ENCODE measurements at regions of chr1 and their contacts with region 1.

Region 1: GRCh38 chr1:174153085-174153825 is 6.1 kb upstream of the RABGAP1L start:
- DNase-seq: no peak
- H3K4me3 Mint-ChIP-seq: no peak overlapping the region
- H3K27ac Mint-ChIP-seq: peak overlapping the region; percentile 66
- H3K4me1 Mint-ChIP-seq: peaks cover 48% of the 10 kb centered on the region
- H3K27me3 Mint-ChIP-seq: no peaks in the 10 kb centered on the region

Region 2: GRCh38 chr1:173161510-173162221 is 991.6 kb before region 1 on chr1:
- intact Hi-C with region 1: no loop called
- DNase-seq: no peak
- H3K4me3 Mint-ChIP-seq: no peak overlapping the region
- H3K27ac Mint-ChIP-seq: no peak overlapping the region
- H3K4me1 Mint-ChIP-seq: no peaks in the 10 kb centered on the region
- H3K27me3 Mint-ChIP-seq: peaks cover 1% of the 10 kb centered on the region

Region 3: DNA sequence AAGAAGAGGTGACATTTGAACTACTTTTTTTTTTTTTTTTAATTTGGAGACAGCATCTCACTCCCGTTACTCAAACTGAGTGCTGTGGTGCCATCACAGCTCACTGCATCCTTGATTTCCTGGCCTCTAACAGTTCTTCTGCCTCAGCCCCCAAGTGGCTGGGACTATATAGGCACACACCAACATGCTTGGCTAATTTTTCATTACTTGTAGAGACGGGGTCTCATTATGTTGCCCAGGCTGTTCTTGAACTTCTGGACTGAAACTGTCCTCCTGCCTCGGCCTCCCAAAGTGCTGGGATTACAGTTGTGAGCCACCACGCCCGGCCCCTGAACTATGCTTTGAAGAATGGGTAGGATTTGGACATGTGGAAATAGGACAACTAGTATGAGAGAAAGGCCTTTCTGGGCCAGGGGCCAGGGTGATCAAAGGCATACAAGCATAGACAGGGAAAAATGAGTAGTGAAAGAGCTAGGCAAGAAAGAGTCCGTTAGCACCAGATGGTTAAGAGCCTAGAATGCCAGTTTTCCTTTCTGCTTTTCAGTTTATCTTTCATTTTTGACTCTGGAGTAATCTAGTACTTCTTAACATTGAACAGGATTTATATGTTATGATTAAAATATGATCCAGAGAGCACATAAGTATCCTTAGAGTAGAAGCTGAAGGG is 12.3 kb after region 1 on chr1:
- intact Hi-C with region 1: loop called (anchors 1 kb)
- DNase-seq: no peak
- H3K4me3 Mint-ChIP-seq: no peak overlapping the region
- H3K27ac Mint-ChIP-seq: peak overlapping the region; percentile 49
- H3K4me1 Mint-ChIP-seq: peaks cover 51% of the 10 kb centered on the region
- H3K27me3 Mint-ChIP-seq: no peaks in the 10 kb centered on the region

Measured in activated T-helper 1 cell treated with anti-CD3 and anti-CD28 coated beads, Interleukin-12 subunit alpha, Interleukin-12 subunit beta, Interleukin-2, Interleukin-4 antibody, amounts not matched to agents 30 ng/mL and 10 ng/mL and 1 ng/mL, durations not matched to agents 14 hours and 24 hours and 36 hours (primary cell).